OCI-LY7 (cell line): ENCODE measurements at regions of chr1 and their contacts with region 1.

Region 1: DNA sequence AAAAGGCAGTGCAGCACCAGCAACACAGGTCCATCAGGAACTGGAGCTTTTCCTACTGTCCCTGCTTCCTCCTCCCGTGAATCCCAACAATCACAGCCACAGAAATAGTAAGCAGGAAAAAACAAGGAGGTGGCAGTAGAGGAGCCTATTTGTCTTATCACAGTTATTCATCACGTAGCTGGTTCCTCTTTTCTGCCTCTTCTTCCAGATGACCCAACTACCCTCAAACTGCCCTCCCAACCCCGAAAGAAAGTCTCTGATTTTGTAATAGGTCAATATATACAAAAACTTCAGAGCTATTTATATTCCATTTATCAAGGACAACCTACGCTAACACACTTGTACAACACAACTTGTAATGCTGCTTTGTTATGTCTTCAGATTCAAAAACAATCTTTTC is 21.4 kb downstream of the GNB1 start:
- DNase-seq: no peak
- H3K4me3 ChIP-seq: no peak overlapping the region
- H3K27ac ChIP-seq: peak overlapping the region; percentile 54
- H3K4me1 ChIP-seq: peaks cover 37% of the 10 kb centered on the region
- CTCF ChIP-seq: no peak

Region 2: DNA sequence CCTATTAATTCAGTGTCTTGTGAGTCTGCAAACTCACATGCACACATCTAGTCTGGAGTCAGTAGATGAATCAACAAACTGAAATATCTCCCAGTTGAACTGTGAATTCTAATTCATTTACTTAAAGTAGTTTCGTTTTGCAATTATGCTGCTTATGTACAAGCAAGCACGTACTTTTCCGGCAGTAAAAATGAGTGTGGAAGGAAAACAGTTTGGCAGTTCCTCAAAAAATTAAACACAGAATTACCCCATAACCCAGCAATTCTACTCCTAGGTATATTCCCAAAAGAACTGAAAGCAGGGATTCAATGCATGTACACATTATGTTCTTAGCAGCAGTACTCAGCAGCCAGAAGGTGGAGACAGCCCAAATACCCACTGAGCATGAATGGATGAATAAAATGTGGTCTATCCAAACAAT is 27.9 kb before region 1 on chr1:
- CTCF ChIA-PET with region 1: no interaction called
- POLR2A ChIA-PET with region 1: interaction called, 4 read pairs
- intact Hi-C with region 1: loop called (anchors 2 kb)
- DNase-seq: peak; percentile 46
- H3K4me3 ChIP-seq: peak overlapping the region; percentile 56
- H3K27ac ChIP-seq: peak overlapping the region; percentile 97
- H3K4me1 ChIP-seq: peaks cover 87% of the 10 kb centered on the region
- CTCF ChIP-seq: peak; percentile 66

Region 3: GRCh38 chr1:1883092-1883873 is 13.8 kb after region 1 on chr1:
- CTCF ChIA-PET with region 1: no interaction called
- POLR2A ChIA-PET with region 1: interaction called, 9 read pairs
- intact Hi-C with region 1: loop called (anchors 1 kb)
- DNase-seq: no peak
- H3K4me3 ChIP-seq: no peak overlapping the region
- H3K27ac ChIP-seq: no peak overlapping the region
- H3K4me1 ChIP-seq: peaks cover 27% of the 10 kb centered on the region
- CTCF ChIP-seq: no peak